Heart right ventricle (tissue), 16 donors: ENCODE measurements at regions of chr10 and their contacts with region 1.

Region 1: DNA sequence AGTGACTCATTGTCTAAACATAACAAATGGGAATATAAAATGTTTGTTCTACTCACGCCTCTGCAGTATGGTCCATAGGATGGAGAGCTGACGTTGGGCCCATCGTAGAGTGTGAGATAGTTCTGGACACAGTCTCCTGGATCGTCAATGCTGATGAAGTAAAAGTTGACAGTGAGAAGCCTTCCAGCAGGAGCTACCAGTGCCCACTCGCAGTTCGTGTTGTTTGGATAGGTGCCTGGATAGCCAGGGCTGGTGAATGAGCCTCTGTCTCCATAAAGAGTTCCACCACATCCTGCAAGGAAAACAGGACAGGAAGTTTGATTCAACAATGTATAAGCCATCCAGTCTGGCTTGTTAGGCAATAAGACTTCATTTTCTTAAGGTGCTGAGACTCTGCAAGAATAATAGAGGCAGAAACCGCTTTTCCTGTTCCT is 79.6 kb downstream of the OR13A1 start:
- DNase-seq: no peak
- ATAC-seq: peak in 1 of 8 donors; percentile 58
- H3K4me3 ChIP-seq: no peak overlapping the region
- H3K27ac ChIP-seq: no peak overlapping the region
- H3K4me1 ChIP-seq: peaks cover 0 to 14% (median 0%) of the 10 kb centered on the region in 9 donors
- H3K27me3 ChIP-seq: peaks cover 0 to 16% (median 0%) of the 10 kb centered on the region in 7 donors
- CTCF ChIP-seq: no peak

Region 2: GRCh38 chr10:45008524-45009161 is 227.2 kb before region 1 on chr10:
- intact Hi-C with region 1: loop called in 2 of 10 experiments (anchors 10 kb)
- DNase-seq: peak in 1 of 2 donors; percentile 47
- ATAC-seq: peak; percentile 71 to 94 (median 86)
- H3K4me3 ChIP-seq: peak overlapping the region in 1 of 10 donors; percentile 6
- H3K27ac ChIP-seq: peak overlapping the region in 1 of 10 donors; percentile 23
- H3K4me1 ChIP-seq: peaks cover 0 to 29% (median 18%) of the 10 kb centered on the region in 9 donors
- H3K27me3 ChIP-seq: no peaks in the 10 kb centered on the region
- CTCF ChIP-seq: peak; percentile 65 to 90 (median 81)

Region 3: GRCh38 chr10:45353186-45353585 is 117.4 kb after region 1 on chr10:
- intact Hi-C with region 1: no loop called
- DNase-seq: no peak
- ATAC-seq: no peak
- H3K4me3 ChIP-seq: no peak overlapping the region
- H3K27ac ChIP-seq: peak overlapping the region in 1 of 10 donors; percentile 34
- H3K4me1 ChIP-seq: peaks cover 0 to 8% (median 0%) of the 10 kb centered on the region in 9 donors
- H3K27me3 ChIP-seq: peaks cover 0 to 7% (median 0%) of the 10 kb centered on the region in 7 donors
- CTCF ChIP-seq: no peak